Breast epithelium (tissue), 4 donors: ENCODE measurements at regions of chr11 and their contacts with region 1.

Region 1: DNA sequence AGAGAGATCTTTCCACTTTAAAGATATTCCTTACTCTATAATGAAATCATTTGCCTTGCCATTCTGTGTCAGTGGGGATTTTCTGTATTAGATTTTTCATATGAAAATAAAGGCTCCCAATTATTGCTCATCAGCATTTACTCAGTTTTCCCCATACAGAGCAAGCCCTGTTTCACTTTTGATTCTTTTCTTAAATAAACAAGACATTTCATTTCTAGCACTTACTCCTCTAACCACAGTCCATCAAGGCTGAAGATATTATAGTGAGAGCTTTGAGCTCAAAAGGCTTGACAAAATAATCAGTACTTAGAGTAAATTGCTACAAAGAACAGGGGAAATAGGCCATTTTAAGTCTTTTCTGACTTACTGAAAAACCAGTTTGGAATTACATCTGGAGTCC is 385.1 kb downstream of the LRRC4C start:
- DNase-seq: no peak
- H3K4me3 ChIP-seq: no peak overlapping the region
- H3K27ac ChIP-seq: no peak overlapping the region
- H3K4me1 ChIP-seq: no peaks in the 10 kb centered on the region
- H3K27me3 ChIP-seq: no peaks in the 10 kb centered on the region
- CTCF ChIP-seq: no peak
- POLR2A ChIP-seq: no peak

Region 2: GRCh38 chr11:40885250-40885954 is 188.9 kb before region 1 on chr11:
- intact Hi-C with region 1: no loop called
- DNase-seq: no peak
- H3K4me3 ChIP-seq: no peak overlapping the region
- H3K27ac ChIP-seq: no peak overlapping the region
- H3K4me1 ChIP-seq: no peaks in the 10 kb centered on the region
- H3K27me3 ChIP-seq: no peaks in the 10 kb centered on the region
- CTCF ChIP-seq: no peak
- POLR2A ChIP-seq: no peak

Region 3: DNA sequence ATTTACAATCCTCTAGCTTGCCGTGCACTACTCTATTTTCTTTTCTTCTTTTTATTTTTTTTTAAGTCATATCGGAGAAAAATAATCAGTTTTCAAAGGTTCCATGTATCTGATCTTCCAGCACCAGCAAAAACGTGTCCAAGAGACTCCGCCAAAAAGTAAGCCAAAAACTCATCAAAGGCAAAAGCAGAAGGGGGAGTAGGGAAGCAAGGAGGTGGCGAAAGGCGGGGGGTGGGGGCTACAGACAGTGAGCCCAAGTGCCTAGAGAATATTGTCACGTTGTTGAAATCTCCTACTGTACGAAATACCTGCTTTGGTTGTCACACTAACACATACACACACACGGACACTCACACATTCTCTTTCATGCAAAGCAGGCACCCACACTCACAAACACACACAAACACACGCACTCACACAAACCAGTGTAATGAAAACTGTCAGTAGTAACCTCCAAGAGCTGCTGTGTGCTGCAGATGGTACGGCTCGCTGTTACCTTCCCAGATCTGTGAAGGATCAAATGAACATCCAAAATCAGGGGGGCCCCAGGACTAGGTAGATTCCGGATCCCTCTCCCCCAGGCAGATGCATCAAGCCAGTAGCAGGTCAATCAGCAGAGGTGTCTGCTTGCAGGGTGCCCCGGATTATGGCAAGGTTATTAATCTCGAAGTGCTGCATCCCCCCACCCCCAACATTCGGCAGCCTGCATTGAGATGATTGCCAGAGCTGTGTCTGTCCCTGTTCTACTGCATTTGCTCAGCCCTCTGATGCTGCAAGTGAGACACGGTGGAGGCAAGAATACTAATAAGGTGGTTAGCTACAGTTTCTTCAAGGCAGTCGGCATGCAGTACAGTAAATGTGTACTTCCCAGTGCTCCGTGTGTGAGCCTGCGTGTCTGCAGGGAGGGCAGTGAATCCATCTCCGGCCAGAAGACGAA is 385.4 kb after region 1 on chr11 and contains the start of gene LRRC4C:
- intact Hi-C with region 1: loop called (anchors 5 kb)
- DNase-seq: no peak
- H3K4me3 ChIP-seq: peak within 1 kb of the TSS in 1 of 3 donors; percentile 30
- H3K27ac ChIP-seq: no peak within 1 kb of the TSS
- H3K4me1 ChIP-seq: no peaks in the 10 kb centered on the region
- H3K27me3 ChIP-seq: peaks cover 0 to 7% of the 10 kb centered on the region in 2 donors
- CTCF ChIP-seq: no peak
- POLR2A ChIP-seq: no peak
- total RNA-seq, gene LRRC4C: 2.9 to 15.4 (median 6.6) TPM